ENCODE measurements at regions of chr2 and their contacts with region 1.

Region 1: GRCh38 chr2:241877989-241878970 is 8.8 kb downstream of the RTP5 start:
- DNase-seq: peak; percentile 73
- H3K4me3 Mint-ChIP-seq: no peak overlapping the region
- H3K27ac Mint-ChIP-seq: no peak overlapping the region
- H3K4me1 Mint-ChIP-seq: peaks cover 17% of the 10 kb centered on the region
- H3K27me3 Mint-ChIP-seq: no peaks in the 10 kb centered on the region

Region 2: GRCh38 chr2:241064008-241064801 is 814.1 kb before region 1 on chr2:
- intact Hi-C with region 1: loop called (anchors 10 kb)
- DNase-seq: peak; percentile 22
- H3K4me3 Mint-ChIP-seq: no peak overlapping the region
- H3K27ac Mint-ChIP-seq: no peak overlapping the region
- H3K4me1 Mint-ChIP-seq: no peaks in the 10 kb centered on the region
- H3K27me3 Mint-ChIP-seq: peaks cover 7% of the 10 kb centered on the region

Region 3: GRCh38 chr2:241508240-241509154 is 369.8 kb before region 1 on chr2 and contains the start of gene STK25:
- intact Hi-C with region 1: loop called (anchors 1 kb)
- DNase-seq: peak; percentile 98
- H3K4me3 Mint-ChIP-seq: peak within 1 kb of the TSS; percentile 83
- H3K27ac Mint-ChIP-seq: peak within 1 kb of the TSS; percentile 81
- H3K4me1 Mint-ChIP-seq: peaks cover 8% of the 10 kb centered on the region
- H3K27me3 Mint-ChIP-seq: peaks cover 6% of the 10 kb centered on the region
- total RNA-seq, gene STK25: 125 and 133 TPM in 2 replicates

Region 4: DNA sequence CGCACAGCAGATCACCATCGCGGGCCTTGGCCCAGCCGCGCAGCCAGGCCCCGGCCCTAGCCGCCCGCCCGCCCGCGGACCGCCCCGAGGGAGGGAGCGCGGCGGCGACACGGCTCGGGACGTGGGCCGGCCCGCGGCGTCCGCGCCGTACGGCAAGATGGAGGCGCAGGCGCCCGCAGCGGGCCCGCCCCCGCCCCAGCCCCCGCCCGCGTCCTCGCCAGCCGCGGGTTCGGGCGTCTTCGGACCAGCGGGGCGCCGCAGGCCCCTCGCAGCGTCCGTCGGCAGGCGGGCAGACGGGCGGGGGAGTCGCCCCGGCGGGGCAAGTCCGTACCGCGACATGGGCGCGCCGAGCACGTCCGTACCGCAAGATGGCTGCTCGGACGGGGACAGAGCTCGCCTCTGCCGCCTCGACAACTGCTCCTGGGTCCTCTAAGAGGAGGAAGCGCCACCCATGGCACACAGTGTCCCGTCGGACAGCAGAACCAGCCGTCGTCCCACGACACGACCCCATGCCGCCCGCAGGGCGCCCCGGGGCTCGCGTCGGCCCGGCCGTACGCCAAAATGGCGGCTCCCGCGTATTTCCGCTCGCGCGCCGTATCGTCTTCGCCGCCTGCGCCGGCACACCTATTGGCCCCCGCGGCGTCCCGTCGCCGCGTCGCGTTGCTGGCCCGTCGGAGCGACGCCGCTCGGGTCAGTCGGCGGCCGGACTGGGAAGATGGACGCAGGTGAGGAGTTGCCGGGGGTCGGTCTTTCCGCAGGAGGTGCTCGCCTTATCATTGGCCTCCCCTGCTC is 241.1 kb before region 1 on chr2 and contains the starts of genes ATG4B and THAP4:
- intact Hi-C with region 1: loop called (anchors 1 kb)
- DNase-seq: peak; percentile 78
- H3K4me3 Mint-ChIP-seq: peak within 1 kb of the TSS; percentile 93
- H3K27ac Mint-ChIP-seq: peak within 1 kb of the TSS; percentile 93
- H3K4me1 Mint-ChIP-seq: peaks cover 44% of the 10 kb centered on the region
- H3K27me3 Mint-ChIP-seq: no peaks in the 10 kb centered on the region
- total RNA-seq, gene ATG4B: 116 and 126 TPM in 2 replicates
- total RNA-seq, gene THAP4: 53.1 and 58.5 TPM in 2 replicates

Region 5: GRCh38 chr2:241702132-241703031 is 175.9 kb before region 1 on chr2:
- intact Hi-C with region 1: loop called (anchors 1 kb)
- DNase-seq: peak; percentile 82
- H3K4me3 Mint-ChIP-seq: peak overlapping the region; percentile 78
- H3K27ac Mint-ChIP-seq: peak overlapping the region; percentile 53
- H3K4me1 Mint-ChIP-seq: peaks cover 20% of the 10 kb centered on the region
- H3K27me3 Mint-ChIP-seq: no peaks in the 10 kb centered on the region

Region 6: GRCh38 chr2:241859436-241860183 is 18.7 kb before region 1 on chr2:
- intact Hi-C with region 1: loop called (anchors 1 kb)
- DNase-seq: peak; percentile 33
- H3K4me3 Mint-ChIP-seq: peak overlapping the region; percentile 88
- H3K27ac Mint-ChIP-seq: peak overlapping the region; percentile 99
- H3K4me1 Mint-ChIP-seq: peaks cover 57% of the 10 kb centered on the region
- H3K27me3 Mint-ChIP-seq: peaks cover under 1% of the 10 kb centered on the region

Measured in activated T-helper 1 cell treated with anti-CD3 and anti-CD28 coated beads, Interleukin-12 subunit alpha, Interleukin-12 subunit beta, Interleukin-2, Interleukin-4 antibody, amounts not matched to agents 30 ng/mL and 10 ng/mL and 1 ng/mL, durations not matched to agents 14 hours and 24 hours and 36 hours (primary cell).